Activated T-helper 1 cell treated with anti-CD3 and anti-CD28 coated beads, Interleukin-12 subunit alpha, Interleukin-12 subunit beta, Interleukin-2, Interleukin-4 antibody, amounts not matched to agents 30 ng/mL and 10 ng/mL and 1 ng/mL, durations not matched to agents 14 hours and 24 hours and 36 hours (primary cell): ENCODE measurements at regions of chr13 and their contacts with region 1.

Region 1: GRCh38 chr13:41465241-41465847 is 8.0 kb downstream of the RGCC start:
- DNase-seq: peak; percentile 89
- H3K4me3 Mint-ChIP-seq: peak overlapping the region; percentile 80
- H3K27ac Mint-ChIP-seq: peak overlapping the region; percentile 96
- H3K4me1 Mint-ChIP-seq: peaks cover 90% of the 10 kb centered on the region
- H3K27me3 Mint-ChIP-seq: no peaks in the 10 kb centered on the region

Region 2: DNA sequence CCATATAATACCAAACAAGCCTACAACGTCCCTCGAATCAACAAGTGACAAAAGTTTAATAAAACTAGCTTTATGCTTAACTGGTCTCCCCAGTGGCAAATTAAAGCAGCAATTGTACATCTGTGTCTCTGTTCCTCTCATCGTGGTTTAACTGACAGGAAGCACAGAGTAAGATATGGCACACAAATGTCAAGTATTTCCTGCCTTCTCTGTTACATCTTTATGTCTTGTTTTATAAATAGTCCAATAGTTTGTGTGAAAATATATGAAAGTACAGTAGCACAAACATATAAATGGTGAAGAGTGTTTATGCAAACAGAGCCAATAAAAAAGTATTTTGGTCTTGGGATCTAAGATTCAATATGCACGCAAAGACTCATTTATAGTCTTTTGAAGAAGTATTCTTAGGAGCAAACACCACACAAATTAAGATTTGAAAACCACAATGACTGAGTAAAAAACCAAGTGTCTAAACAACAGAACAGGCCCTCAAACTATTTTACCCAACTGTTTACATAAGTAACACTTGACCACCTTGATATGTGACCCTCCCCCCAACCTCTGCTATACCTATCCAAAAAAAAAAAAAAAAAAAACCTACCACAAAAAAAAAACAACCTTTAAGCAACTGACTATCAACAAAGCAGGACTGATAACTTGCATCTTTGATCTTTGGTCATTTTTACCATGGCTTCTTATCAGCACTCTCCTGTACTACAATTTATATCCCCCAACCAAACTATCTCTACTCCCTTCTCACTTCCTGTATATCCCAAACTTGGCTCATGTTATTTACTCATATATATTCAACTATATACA is 460.3 kb before region 1 on chr13:
- intact Hi-C with region 1: loop called (anchors 5 kb)
- DNase-seq: no peak
- H3K4me3 Mint-ChIP-seq: peak overlapping the region; percentile 59
- H3K27ac Mint-ChIP-seq: peak overlapping the region; percentile 88
- H3K4me1 Mint-ChIP-seq: peaks cover 66% of the 10 kb centered on the region
- H3K27me3 Mint-ChIP-seq: no peaks in the 10 kb centered on the region

Region 3: GRCh38 chr13:41428155-41428554 is 37.2 kb before region 1 on chr13:
- intact Hi-C with region 1: loop called (anchors 5 kb)
- DNase-seq: no peak
- H3K4me3 Mint-ChIP-seq: no peak overlapping the region
- H3K27ac Mint-ChIP-seq: no peak overlapping the region
- H3K4me1 Mint-ChIP-seq: peaks cover 14% of the 10 kb centered on the region
- H3K27me3 Mint-ChIP-seq: peaks cover 7% of the 10 kb centered on the region

Region 4: GRCh38 chr13:41492404-41493260 is 27.3 kb after region 1 on chr13:
- intact Hi-C with region 1: loop called (anchors 1 kb)
- DNase-seq: peak; percentile 22
- H3K4me3 Mint-ChIP-seq: peak overlapping the region; percentile 60
- H3K27ac Mint-ChIP-seq: peak overlapping the region; percentile 76
- H3K4me1 Mint-ChIP-seq: peaks cover 81% of the 10 kb centered on the region
- H3K27me3 Mint-ChIP-seq: no peaks in the 10 kb centered on the region

Region 5: GRCh38 chr13:41502673-41503072 is 37.3 kb after region 1 on chr13:
- intact Hi-C with region 1: loop called (anchors 1 kb)
- DNase-seq: no peak
- H3K4me3 Mint-ChIP-seq: no peak overlapping the region
- H3K27ac Mint-ChIP-seq: no peak overlapping the region
- H3K4me1 Mint-ChIP-seq: peaks cover 58% of the 10 kb centered on the region
- H3K27me3 Mint-ChIP-seq: peaks cover 2% of the 10 kb centered on the region

Region 6: GRCh38 chr13:41554626-41555386 is 89.5 kb after region 1 on chr13:
- intact Hi-C with region 1: loop called (anchors 1 kb)
- DNase-seq: peak; percentile 16
- H3K4me3 Mint-ChIP-seq: no peak overlapping the region
- H3K27ac Mint-ChIP-seq: peak overlapping the region; percentile 30
- H3K4me1 Mint-ChIP-seq: peaks cover 21% of the 10 kb centered on the region
- H3K27me3 Mint-ChIP-seq: no peaks in the 10 kb centered on the region